Heart right ventricle (tissue), 16 donors: ENCODE measurements at regions of chr16 and their contacts with region 1.

Region 1: GRCh38 chr16:50368410-50369132 is at the start of gene BRD7:
- DNase-seq: peak; percentile 41 to 73
- ATAC-seq: peak; percentile 62 to 89 (median 66)
- H3K4me3 ChIP-seq: peak within 1 kb of the TSS; percentile 68 to 99 (median 92)
- H3K27ac ChIP-seq: peak within 1 kb of the TSS in 9 of 10 donors; percentile 55 to 88 (median 69)
- H3K4me1 ChIP-seq: peaks cover 9 to 54% (median 33%) of the 10 kb centered on the region in 9 donors
- H3K27me3 ChIP-seq: no peaks in the 10 kb centered on the region
- CTCF ChIP-seq: peak; percentile 22 to 84 (median 48)
- total RNA-seq, gene BRD7: 35.3 to 50.9 (median 43.6) TPM

Region 2: GRCh38 chr16:50210266-50211038 is 158.1 kb before region 1 on chr16:
- intact Hi-C with region 1: loop called in 1 of 10 experiments (anchors 5 kb)
- DNase-seq: peak; percentile 72 to 82
- ATAC-seq: peak; percentile 86 to 95 (median 92)
- H3K4me3 ChIP-seq: no peak overlapping the region
- H3K27ac ChIP-seq: peak overlapping the region in 2 of 10 donors; percentile 9 to 39
- H3K4me1 ChIP-seq: peaks cover 7 to 51% (median 33%) of the 10 kb centered on the region in 9 donors
- H3K27me3 ChIP-seq: no peaks in the 10 kb centered on the region
- CTCF ChIP-seq: peak; percentile 41 to 90 (median 74)

Region 3: DNA sequence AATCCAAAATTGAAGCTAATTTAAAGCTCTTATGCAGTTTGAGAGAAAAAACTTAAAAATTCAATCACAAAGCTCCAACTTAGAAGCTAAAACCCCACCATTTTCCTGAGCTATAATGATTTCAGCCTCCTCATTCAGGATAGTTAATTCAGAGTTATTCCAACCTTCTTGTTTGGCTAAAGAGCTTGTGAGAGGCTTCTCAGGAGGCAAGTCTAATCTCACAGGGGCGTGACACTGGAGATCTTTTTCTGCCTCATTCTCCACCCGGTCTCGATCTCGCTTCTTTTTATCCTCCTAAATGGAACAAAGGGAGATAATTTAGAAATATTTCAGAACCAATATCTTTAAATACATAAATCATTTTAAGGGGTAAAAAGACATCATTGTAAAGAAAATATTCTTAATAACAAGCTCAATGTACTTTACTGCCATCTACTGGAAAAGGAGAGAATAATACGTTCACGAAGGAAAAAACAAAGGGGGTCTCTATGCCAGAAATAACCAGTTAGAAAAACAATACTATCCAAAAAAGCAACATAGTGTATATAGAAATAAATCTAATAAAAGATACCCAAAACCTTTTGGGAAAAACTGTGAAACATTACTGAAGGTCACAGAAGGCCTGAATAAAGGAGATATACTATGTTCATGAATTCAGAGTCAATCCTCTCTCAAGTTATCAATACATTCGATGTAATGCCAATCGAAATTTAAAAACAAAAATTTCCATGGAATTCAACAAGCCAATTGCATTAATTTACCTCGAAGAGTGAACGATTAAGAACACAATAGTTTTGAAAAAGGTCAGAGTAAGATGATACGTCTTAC is 13.7 kb before region 1 on chr16:
- intact Hi-C with region 1: no loop called
- DNase-seq: no peak
- ATAC-seq: no peak
- H3K4me3 ChIP-seq: no peak overlapping the region
- H3K27ac ChIP-seq: no peak overlapping the region
- H3K4me1 ChIP-seq: peaks cover 0 to 6% (median 0%) of the 10 kb centered on the region in 9 donors
- H3K27me3 ChIP-seq: no peaks in the 10 kb centered on the region
- CTCF ChIP-seq: peak; percentile 11 to 76 (median 64)

Region 4: DNA sequence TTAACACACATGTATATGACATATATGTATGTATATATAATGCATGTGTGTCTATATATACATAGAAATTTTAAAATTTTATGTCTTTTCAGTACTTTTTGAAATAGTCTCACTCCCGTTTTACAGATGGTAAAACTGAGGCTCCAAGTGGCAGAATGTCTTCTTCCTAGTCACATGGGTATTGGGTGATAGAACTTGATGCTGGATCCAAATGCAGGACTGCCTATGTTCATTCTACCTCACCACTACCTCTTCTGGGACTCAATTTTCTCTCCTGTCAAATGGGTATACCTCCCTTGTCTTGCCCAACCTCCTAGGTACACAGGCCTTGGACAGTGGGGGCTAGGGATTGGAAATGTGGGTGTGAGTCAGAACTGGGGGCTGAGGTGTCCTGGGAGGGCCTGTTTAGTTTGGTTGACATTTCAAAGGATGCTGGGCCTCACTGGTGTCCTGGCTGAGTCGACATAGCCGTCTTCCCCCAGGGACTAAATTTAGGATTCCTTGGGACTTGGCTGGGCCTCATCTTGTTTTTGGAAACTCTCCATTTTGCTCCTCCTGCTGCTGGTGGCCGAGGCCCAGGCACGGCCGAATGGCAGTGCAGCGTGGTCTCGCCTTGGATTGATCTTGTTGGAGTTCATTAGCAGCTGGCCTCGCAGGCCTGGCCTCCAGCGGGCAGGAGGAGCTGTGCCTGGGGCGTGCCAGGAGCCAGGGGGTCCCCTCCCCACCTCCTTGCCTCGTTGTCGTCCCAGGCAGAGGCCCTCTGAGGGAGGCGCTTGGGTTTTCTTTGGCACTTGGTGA is 205.6 kb after region 1 on chr16:
- intact Hi-C with region 1: no loop called
- DNase-seq: peak in 1 of 2 donors; percentile 35
- ATAC-seq: peak; percentile 25 to 59 (median 44)
- H3K4me3 ChIP-seq: no peak overlapping the region
- H3K27ac ChIP-seq: peak overlapping the region in 5 of 10 donors; percentile 10 to 60 (median 34)
- H3K4me1 ChIP-seq: peaks cover 0 to 19% (median 6%) of the 10 kb centered on the region in 9 donors
- H3K27me3 ChIP-seq: peaks cover 0 to 3% (median 0%) of the 10 kb centered on the region in 7 donors
- CTCF ChIP-seq: no peak

Region 5: GRCh38 chr16:50627419-50627818 is 258.8 kb after region 1 on chr16:
- intact Hi-C with region 1: loop called in 1 of 10 experiments (anchors 10 kb)
- DNase-seq: peak; percentile 39 to 59
- ATAC-seq: peak; percentile 71 to 90 (median 83)
- H3K4me3 ChIP-seq: no peak overlapping the region
- H3K27ac ChIP-seq: no peak overlapping the region
- H3K4me1 ChIP-seq: peaks cover 0 to 13% (median 10%) of the 10 kb centered on the region in 9 donors
- H3K27me3 ChIP-seq: no peaks in the 10 kb centered on the region
- CTCF ChIP-seq: peak in 8 of 9 donors; percentile 13 to 60 (median 42)

Region 6: DNA sequence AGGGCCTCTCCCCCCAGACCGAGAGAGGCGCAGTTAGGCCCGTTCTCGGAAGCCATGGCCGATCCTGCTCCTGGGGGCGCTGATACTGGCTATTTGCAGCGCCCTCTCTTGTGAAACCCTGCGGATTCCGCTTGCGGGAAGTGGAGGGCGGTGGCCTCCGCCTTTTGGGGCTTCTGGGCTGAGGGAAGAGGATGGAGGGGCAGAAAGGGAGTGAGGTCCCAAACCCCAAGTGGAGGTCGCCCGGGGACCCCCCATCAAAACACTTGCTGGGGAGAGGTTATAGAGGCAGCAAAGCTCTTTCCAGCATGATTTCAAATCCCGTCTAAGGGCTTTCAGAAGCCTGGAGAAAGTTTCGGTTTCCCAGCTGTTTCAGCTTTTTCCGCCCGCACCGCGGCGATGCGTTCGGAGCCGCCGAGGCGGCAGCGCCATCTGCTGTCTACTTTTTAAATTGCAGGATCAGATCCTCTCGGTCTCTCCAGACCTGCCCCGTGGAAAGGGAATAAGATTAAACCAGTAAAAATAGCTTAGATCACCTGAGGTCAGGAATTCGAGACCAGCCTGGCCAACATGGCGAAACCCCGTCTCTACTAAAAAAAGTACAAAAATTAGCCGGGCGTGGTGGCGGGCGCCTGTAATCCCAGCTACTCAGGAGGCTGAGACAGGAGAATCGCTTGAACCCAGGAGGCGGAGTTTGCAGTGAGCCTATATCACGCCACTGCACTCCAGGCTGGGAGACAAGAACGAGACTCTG is 296.7 kb after region 1 on chr16:
- intact Hi-C with region 1: loop called in 8 of 10 experiments (anchors 5 to 10 kb)
- DNase-seq: peak; percentile 78 to 83
- ATAC-seq: peak; percentile 70 to 93 (median 88)
- H3K4me3 ChIP-seq: peak overlapping the region; percentile 31 to 63 (median 52)
- H3K27ac ChIP-seq: peak overlapping the region in 9 of 10 donors; percentile 36 to 93 (median 79)
- H3K4me1 ChIP-seq: peaks cover 2 to 45% (median 17%) of the 10 kb centered on the region in 9 donors
- H3K27me3 ChIP-seq: no peaks in the 10 kb centered on the region
- CTCF ChIP-seq: peak; percentile 89 to 97 (median 92)

Region 7: DNA sequence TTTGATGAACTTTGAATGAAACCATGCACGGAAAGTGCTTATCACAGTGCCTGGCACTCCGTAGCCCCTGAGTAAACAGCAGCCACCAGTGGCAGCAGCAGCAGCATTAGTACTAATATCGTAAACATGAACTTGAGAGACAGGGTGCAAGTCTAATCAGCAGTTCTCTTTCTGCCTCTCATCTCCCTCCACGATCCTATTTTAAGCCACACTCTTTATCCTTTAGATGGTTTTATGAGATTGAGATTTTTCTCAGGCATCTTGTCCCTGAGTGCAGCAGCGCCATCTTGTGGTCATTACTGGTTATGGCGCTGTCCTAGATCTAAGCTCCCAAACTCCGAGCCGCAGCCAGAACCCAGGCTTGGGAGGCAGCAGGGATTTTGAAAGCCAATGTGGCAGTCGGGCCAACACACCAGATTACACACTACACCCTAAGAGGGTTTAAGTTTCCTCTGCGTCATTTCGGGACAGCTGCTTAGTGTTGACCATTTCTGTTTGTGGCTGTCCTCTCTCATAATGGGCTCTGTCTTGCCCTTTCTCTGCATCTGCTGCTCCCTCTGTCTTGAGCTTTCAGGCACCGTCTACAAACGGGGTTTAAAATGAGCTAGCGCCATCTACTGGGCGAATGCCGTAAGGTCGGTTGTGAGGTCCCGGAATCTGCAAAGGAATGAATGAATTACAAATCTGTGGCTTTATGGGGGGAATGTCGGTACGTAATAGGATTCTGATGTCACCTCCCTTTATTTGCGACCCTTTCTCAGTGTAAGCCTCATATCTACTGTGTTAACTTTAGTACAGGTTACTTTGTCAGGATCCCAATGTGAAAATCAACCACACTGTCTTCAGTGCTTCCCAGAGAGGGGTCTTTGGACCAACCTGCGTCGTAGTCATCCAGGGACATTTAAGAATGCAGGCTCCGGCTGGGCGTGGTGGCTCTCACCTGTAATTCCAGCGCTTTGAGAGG is 437.8 kb after region 1 on chr16:
- intact Hi-C with region 1: loop called in 3 of 10 experiments (anchors 10 kb)
- DNase-seq: peak; percentile 67 to 85
- ATAC-seq: peak; percentile 90 to 95 (median 94)
- H3K4me3 ChIP-seq: peak overlapping the region in 9 of 10 donors; percentile 4 to 50 (median 41)
- H3K27ac ChIP-seq: peak overlapping the region in 8 of 10 donors; percentile 5 to 61 (median 29)
- H3K4me1 ChIP-seq: peaks cover 0 to 13% (median 6%) of the 10 kb centered on the region in 9 donors
- H3K27me3 ChIP-seq: no peaks in the 10 kb centered on the region
- CTCF ChIP-seq: peak; percentile 85 to 97 (median 92)